ENCODE measurements at regions of chr1 and their contacts with region 1.

Region 1: DNA sequence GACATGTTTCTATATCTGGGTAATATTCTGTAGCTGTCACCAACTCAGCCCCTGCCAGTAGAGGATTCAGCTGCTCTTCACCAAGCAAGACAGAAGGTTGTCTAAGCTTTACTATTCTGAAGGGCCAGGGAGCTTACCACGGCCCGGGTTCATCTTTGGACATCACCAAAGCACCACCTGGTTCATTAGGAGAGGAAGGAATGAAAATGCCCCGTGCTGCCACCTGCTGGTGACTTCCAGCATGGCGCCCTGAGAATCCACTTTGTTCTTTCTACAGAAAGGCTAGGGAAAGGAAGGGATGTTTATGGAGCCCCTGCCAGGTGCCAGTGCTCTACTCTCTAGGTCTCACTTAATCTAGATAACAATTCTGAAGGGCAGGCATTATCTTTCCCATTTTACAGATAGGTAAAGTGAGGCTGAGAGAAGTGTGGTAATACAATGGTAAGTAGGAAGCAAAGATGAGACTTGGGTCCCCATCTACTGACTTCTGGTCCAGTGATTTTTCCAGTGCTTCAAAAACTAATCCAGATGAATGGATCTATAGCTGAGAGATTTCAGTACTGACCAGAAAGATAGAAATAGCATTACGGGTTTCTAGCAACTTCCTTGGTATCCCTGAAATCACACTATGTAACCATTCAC is 79.5 kb downstream of the BEND5 start:
- DNase-seq: peak in 1 of 2 experiments; percentile 97
- H3K4me3 ChIP-seq: no peak overlapping the region
- H3K27ac ChIP-seq: no peak overlapping the region
- H3K4me1 ChIP-seq: no peaks in the 10 kb centered on the region
- H3K27me3 ChIP-seq: no peaks in the 10 kb centered on the region
- CTCF ChIP-seq: peak; percentile 78 to 89 (median 84)
- EP300 ChIP-seq: no peak
- POLR2A ChIP-seq: no peak
- RAD21 ChIP-seq: peak; percentile 64 to 77

Region 2: GRCh38 chr1:48572646-48573261 is 124.4 kb before region 1 on chr1:
- CTCF ChIA-PET with region 1: interaction called, 91 read pairs
- POLR2A ChIA-PET with region 1: interaction called, 3 read pairs
- DNase-seq: peak; percentile 79 to 80
- H3K4me3 ChIP-seq: no peak overlapping the region
- H3K27ac ChIP-seq: no peak overlapping the region
- H3K4me1 ChIP-seq: peaks cover 0 to 4% (median 0%) of the 10 kb centered on the region in 4 experiments; a peak in 1 of 7 replicates
- H3K27me3 ChIP-seq: no peaks in the 10 kb centered on the region
- CTCF ChIP-seq: peak; percentile 94 to 99 (median 96)
- EP300 ChIP-seq: no peak
- POLR2A ChIP-seq: no peak
- RAD21 ChIP-seq: peak; percentile 99 to 100

Region 3: DNA sequence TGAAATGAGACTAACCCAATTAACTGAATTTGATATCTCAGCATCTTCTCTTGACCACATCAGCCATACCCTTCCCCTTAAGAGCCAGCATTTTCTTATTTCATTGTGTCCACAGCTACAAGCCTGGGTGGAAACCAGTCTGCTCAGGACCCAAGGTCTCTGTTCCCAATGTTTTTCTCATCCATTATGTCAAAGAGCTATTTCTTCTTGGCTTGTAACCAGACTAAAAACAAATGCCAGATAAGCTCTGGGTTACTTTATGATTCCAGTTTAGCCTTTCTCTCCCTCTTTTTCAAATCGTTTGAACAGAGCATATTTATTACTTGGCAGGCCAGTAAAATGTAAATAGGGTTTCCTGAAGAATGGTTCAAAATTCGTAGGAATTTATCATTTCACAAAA is 115.9 kb before region 1 on chr1:
- CTCF ChIA-PET with region 1: interaction called, 65 read pairs
- POLR2A ChIA-PET with region 1: no interaction called
- DNase-seq: no peak
- H3K4me3 ChIP-seq: no peak overlapping the region
- H3K27ac ChIP-seq: no peak overlapping the region
- H3K4me1 ChIP-seq: no peaks in the 10 kb centered on the region
- H3K27me3 ChIP-seq: no peaks in the 10 kb centered on the region
- CTCF ChIP-seq: no peak
- EP300 ChIP-seq: no peak
- POLR2A ChIP-seq: no peak
- RAD21 ChIP-seq: no peak

Region 4: DNA sequence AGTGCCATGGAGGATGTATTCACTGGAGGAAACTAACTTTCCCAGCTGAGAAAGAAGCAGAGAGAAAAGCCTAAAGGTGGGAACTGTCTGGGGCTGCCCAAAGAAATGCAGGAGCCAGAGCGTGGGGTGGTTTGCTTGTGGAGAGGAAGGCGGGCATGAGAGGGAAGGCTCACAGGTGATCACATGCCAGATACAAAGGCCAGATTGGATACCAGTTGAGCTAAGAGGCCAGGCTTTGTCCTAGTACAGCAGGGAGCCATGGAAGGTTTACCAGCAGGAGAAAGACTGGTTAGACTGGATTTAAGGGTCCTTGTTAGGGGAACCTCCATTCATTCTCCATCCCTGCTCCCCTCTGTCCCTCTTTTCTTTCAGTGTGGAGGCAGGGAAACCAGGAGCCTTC is 13.1 kb after region 1 on chr1:
- CTCF ChIA-PET with region 1: interaction called, 14 read pairs
- POLR2A ChIA-PET with region 1: no interaction called
- DNase-seq: peak; percentile 10 to 56
- H3K4me3 ChIP-seq: peak overlapping the region in 1 of 4 experiments; percentile 14; a peak in 2 of 8 replicates
- H3K27ac ChIP-seq: peak overlapping the region; percentile 68
- H3K4me1 ChIP-seq: peaks cover 3 to 13% (median 7%) of the 10 kb centered on the region in 4 experiments; a peak in 6 of 7 replicates
- H3K27me3 ChIP-seq: no peaks in the 10 kb centered on the region
- CTCF ChIP-seq: no peak
- EP300 ChIP-seq: no peak; a peak in 1 of 3 replicates
- POLR2A ChIP-seq: 0 out of 3 replicates have a peak, but pooled peaks of 1 of the 2 experiments have one; percentile 40
- RAD21 ChIP-seq: no peak

Region 5: DNA sequence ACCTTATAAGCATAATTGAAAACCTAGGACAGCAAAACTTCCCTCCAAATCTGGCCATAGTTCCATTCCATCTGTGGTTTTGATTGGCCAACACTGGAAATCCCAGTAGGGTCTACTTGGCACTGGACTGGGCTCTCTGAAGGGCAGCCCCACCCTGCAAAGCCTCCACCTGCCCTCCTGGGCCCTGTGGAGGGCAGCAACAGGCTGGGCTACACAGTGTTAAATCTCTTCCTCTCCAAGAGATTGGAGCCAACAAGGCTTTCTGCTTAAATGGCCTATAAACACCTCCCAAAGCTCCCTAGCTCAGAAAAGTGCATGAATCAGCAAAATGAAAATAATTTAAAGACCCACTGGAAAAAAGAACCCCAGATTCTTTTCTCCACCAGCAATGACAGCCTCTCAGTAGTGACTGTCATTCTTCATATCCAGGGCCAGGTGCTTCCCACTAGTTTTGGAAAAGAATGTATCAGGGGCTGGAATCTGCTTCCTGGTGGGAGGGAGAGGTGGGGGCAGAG is 21.0 kb after region 1 on chr1:
- CTCF ChIA-PET with region 1: interaction called, 10 read pairs
- POLR2A ChIA-PET with region 1: no interaction called
- DNase-seq: no peak
- H3K4me3 ChIP-seq: no peak overlapping the region
- H3K27ac ChIP-seq: no peak overlapping the region
- H3K4me1 ChIP-seq: no peaks in the 10 kb centered on the region
- H3K27me3 ChIP-seq: no peaks in the 10 kb centered on the region
- CTCF ChIP-seq: peak; percentile 3 to 14 (median 3); a peak in 3 of 4 replicates
- EP300 ChIP-seq: no peak
- POLR2A ChIP-seq: no peak
- RAD21 ChIP-seq: peak; percentile 33 to 51; a peak in 3 of 4 replicates

Region 6: GRCh38 chr1:48741395-48741794 is 44.2 kb after region 1 on chr1:
- CTCF ChIA-PET with region 1: interaction called, 18 read pairs
- POLR2A ChIA-PET with region 1: no interaction called
- DNase-seq: no peak
- H3K4me3 ChIP-seq: no peak overlapping the region
- H3K27ac ChIP-seq: no peak overlapping the region
- H3K4me1 ChIP-seq: no peaks in the 10 kb centered on the region; a peak in 1 of 7 replicates
- H3K27me3 ChIP-seq: no peaks in the 10 kb centered on the region
- CTCF ChIP-seq: no peak
- EP300 ChIP-seq: no peak
- POLR2A ChIP-seq: no peak
- RAD21 ChIP-seq: no peak

Measured in H1 (cell line).